ENCODE measurements at regions of chr16 and their contacts with region 1.

Region 1: DNA sequence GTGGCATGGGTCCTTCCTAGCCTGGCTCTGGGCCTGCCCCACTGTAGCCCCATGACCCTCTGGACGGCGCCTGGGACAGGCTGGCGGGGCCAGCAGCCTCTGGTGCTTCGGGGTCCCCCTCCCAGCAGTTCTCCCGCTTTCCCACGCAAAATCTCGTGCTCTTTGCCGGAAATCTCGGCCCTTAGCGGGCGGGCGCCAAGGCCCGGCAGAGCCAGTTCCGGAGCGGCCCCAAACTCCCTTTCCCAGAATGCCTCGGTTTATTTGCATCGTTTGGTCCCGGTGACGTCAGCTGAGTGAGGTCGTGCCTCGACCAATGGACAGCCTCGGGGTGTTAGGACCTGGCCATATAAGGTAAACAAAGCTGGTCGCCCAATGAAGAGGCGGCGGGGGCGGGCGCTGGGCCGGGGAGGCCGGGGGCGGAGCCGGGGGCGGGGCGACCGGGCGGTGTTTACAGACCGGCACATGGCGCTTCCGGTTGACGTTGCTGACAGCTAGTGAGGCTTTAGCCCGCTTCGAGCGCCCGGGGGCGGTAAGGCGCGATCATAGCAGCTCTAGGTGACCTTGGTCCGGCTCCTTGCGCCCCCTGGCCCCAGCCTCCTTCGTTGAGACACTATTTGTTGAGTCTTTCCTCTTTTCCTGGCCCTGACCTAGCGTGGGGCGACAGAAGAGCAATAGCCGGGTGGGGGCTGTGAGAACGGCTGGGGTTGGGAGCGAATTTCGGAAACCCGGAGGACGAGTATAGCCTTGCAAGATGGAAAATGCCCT is 1.5 kb upstream of the UBALD1 start:
- DNase-seq: peak; percentile 100
- H3K4me3 Mint-ChIP-seq: peak overlapping the region; percentile 85
- H3K27ac Mint-ChIP-seq: peak overlapping the region; percentile 98
- H3K4me1 Mint-ChIP-seq: peaks cover 18% of the 10 kb centered on the region
- H3K27me3 Mint-ChIP-seq: no peaks in the 10 kb centered on the region
- CTCF ChIP-seq: peak; percentile 33

Region 2: DNA sequence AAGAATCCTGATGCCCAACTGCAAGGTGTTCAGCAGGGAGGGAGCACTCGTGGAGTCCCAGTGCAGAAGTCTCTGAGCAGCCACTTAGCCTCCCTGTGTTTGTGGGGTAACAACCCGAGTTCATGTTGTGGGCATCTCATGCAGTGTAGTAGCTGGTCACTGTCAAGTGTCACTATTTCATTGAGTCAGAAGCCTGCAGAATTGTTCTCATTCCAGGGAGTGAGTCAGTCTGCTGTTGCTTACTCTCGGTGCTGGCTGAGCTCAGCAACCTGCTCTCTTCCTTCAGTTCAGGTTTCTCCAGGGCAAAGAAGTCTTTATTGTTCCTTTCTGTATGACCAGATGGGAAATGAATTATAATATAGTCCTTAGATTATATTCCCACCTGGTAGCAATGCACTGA is 116.0 kb before region 1 on chr16:
- CTCF ChIA-PET with region 1: interaction called, 5 read pairs
- POLR2A ChIA-PET with region 1: interaction called, 23 read pairs
- intact Hi-C with region 1: no loop called
- DNase-seq: peak; percentile 66
- H3K4me3 Mint-ChIP-seq: no peak overlapping the region
- H3K27ac Mint-ChIP-seq: no peak overlapping the region
- H3K4me1 Mint-ChIP-seq: peaks cover 44% of the 10 kb centered on the region
- H3K27me3 Mint-ChIP-seq: no peaks in the 10 kb centered on the region
- CTCF ChIP-seq: no peak

Region 3: GRCh38 chr16:4601036-4601863 is 15.0 kb before region 1 on chr16:
- CTCF ChIA-PET with region 1: interaction called, 3 read pairs
- POLR2A ChIA-PET with region 1: interaction called, 24 read pairs
- intact Hi-C with region 1: no loop called
- DNase-seq: no peak
- H3K4me3 Mint-ChIP-seq: no peak overlapping the region
- H3K27ac Mint-ChIP-seq: no peak overlapping the region
- H3K4me1 Mint-ChIP-seq: no peaks in the 10 kb centered on the region
- H3K27me3 Mint-ChIP-seq: peaks cover 11% of the 10 kb centered on the region
- CTCF ChIP-seq: no peak

Region 4: GRCh38 chr16:4664538-4665418 is 48.5 kb after region 1 on chr16:
- CTCF ChIA-PET with region 1: no interaction called
- POLR2A ChIA-PET with region 1: no interaction called
- intact Hi-C with region 1: no loop called
- DNase-seq: peak; percentile 43
- H3K4me3 Mint-ChIP-seq: no peak overlapping the region
- H3K27ac Mint-ChIP-seq: no peak overlapping the region
- H3K4me1 Mint-ChIP-seq: peaks cover 13% of the 10 kb centered on the region
- H3K27me3 Mint-ChIP-seq: no peaks in the 10 kb centered on the region
- CTCF ChIP-seq: no peak